GM13977 (cell line): ENCODE measurements at regions of chr6 and their contacts with region 1.

Region 1: GRCh38 chr6:125779924-125780539 is 10.7 kb upstream of the NCOA7 start:
- DNase-seq: peak; percentile 85
- CTCF ChIP-seq: no peak

Region 2: DNA sequence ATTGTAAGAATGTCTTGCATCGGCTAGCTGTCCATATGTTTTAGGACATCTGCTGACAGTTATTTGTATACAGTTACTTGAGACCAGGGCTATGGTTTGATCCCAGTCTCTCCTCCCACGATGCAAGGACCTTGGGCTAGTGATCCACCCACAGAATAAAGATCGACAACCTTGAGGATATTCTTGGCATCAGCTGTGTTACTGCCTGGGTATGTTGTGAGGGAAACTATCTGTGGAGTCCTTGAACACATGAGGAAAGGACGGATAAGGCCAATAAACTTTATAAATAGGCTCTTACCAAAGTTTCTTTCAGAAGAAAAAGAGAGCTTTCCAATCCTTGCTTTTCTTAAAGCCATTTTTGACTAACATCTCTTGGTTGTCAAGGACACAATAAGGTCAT is 101.4 kb before region 1 on chr6:
- in situ Hi-C with region 1: no loop called
- DNase-seq: no peak
- CTCF ChIP-seq: no peak

Region 3: GRCh38 chr6:125974214-125974866 is 194.3 kb after region 1 on chr6:
- in situ Hi-C with region 1: loop called (anchors 10 kb)
- DNase-seq: no peak
- CTCF ChIP-seq: peak; percentile 52

Region 4: DNA sequence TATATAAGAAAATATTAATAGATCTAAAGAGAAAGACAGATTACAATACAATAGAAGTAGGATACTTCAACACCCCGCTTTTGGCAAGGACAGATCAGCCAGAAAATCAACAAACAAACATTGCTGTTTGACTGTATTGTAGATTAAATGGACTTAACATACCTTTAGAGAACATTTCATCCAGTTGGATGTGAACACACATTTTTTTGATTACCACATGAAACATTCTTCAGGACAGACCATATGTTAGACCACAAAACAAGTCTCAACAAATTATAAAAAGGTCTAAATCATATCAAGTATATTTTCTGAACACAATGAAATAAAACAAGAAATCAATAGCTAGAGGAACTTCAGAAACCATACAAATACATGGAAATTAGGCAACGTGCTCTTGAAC is 354.5 kb after region 1 on chr6:
- in situ Hi-C with region 1: no loop called
- DNase-seq: no peak
- CTCF ChIP-seq: no peak

Region 5: GRCh38 chr6:126312013-126312663 is 532.1 kb after region 1 on chr6:
- in situ Hi-C with region 1: no loop called
- DNase-seq: peak; percentile 26
- CTCF ChIP-seq: peak; percentile 10